GM12878 (cell line): ENCODE measurements at regions of chr3 and their contacts with region 1.

Region 1: DNA sequence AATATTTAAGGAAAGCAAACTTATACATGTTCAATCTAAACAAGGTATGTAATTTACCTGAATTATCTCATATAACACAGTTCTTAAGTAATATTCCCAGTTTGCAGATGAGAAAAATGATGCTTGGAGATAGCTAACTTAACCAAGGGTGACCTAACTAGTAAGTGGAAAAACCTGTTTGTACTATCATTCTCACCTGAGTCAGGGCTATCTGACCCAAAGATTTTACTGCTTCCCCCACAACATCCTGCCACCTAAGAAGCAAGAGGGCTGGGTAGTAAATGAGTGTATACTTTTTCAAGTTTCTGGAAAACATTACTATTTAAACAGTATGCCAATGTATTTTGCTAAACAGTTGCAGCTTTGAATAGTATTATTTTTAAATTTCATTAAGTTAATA is 10.6 kb downstream of the TP63 start:
- DNase-seq: no peak
- ATAC-seq: peak; percentile 81
- H3K4me3 ChIP-seq: no peak overlapping the region
- H3K27ac ChIP-seq: no peak overlapping the region
- H3K4me1 ChIP-seq: peaks cover 8% of the 10 kb centered on the region; the same call in 1 of the 2 replicates
- H3K27me3 ChIP-seq: no peaks in the 10 kb centered on the region
- CTCF ChIP-seq: no peak
- EP300 ChIP-seq: no peak
- POLR2A ChIP-seq: no peak
- RAD21 ChIP-seq: no peak

Region 2: DNA sequence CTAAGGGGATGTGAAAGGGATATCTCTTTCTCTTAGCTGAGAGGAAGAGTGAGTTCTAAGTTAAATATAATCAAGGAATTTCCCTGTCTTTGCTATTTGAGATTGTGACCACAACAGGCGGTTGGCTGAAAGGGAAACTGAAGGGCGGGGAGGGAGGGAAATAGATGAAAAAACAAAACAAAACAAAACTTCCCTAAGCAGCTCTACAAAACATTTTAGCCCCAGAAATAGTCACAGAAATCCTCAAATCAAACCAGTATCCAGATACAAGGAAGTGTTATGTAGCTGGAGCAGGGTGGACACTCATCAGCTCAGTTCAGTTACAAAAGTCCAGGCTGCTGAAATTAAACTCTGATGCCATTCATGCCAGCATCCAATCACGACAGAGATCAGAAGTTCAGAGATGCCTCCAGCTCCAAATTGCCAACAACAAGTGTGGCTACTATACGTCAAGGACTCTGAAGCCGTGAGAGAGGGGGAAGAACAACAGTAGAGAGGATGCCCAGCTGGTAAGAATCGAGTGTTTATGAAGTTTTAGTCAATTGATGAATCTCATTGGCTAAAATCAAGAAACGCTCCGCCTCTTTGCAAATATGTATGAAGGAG is 10.9 kb before region 1 on chr3:
- CTCF ChIA-PET with region 1: interaction called, 5 read pairs
- POLR2A ChIA-PET with region 1: interaction called, 11 read pairs
- RAD21 ChIA-PET with region 1: interaction called, 12 read pairs
- SMC1A ChIA-PET with region 1: interaction called, 39 read pairs
- in situ Hi-C with region 1: no loop called
- intact Hi-C with region 1: no loop called
- DNase-seq: peak; percentile 73
- ATAC-seq: peak; percentile 81
- H3K4me3 ChIP-seq: peak overlapping the region; percentile 65
- H3K27ac ChIP-seq: peak overlapping the region; percentile 86
- H3K4me1 ChIP-seq: peaks cover 13% of the 10 kb centered on the region; the same call in 1 of the 2 replicates
- H3K27me3 ChIP-seq: no peaks in the 10 kb centered on the region
- CTCF ChIP-seq: no peak
- EP300 ChIP-seq: peak in 1 of 2 experiments; percentile 41; a peak in 1 of 4 replicates
- POLR2A ChIP-seq: no peak
- RAD21 ChIP-seq: 0 out of 2 replicates have a peak, but pooled peaks have one; percentile 6

Region 3: DNA sequence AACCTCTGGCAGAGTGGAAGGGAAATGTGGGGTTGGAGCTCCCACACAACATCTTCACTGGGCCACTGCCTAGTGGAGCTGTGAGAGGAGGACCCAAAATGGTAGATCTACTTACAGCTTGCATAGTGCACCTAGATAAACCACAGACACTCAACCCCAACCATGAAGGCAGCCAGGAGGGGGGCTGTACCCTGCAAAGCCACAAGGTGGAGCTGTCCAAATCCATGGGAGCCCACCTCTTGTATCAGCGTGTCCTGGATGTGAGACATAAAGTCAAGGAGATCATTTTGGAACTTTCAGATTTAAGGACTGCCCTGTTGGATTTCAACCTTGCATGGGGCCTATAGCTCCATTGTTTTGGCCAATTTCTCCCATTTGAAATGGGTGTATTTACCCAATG is 10.3 kb after region 1 on chr3:
- CTCF ChIA-PET with region 1: interaction called, 6 read pairs
- POLR2A ChIA-PET with region 1: interaction called, 4 read pairs
- RAD21 ChIA-PET with region 1: interaction called, 6 read pairs
- SMC1A ChIA-PET with region 1: interaction called, 14 read pairs
- in situ Hi-C with region 1: no loop called
- intact Hi-C with region 1: no loop called
- DNase-seq: no peak
- ATAC-seq: no peak
- H3K4me3 ChIP-seq: no peak overlapping the region
- H3K27ac ChIP-seq: no peak overlapping the region
- H3K4me1 ChIP-seq: peaks cover 3% of the 10 kb centered on the region; the same call in 1 of the 2 replicates
- H3K27me3 ChIP-seq: no peaks in the 10 kb centered on the region
- CTCF ChIP-seq: peak in 2 of 3 experiments; percentile 36 to 37; a peak in 2 of 6 replicates
- EP300 ChIP-seq: no peak
- POLR2A ChIP-seq: no peak
- RAD21 ChIP-seq: 0 out of 2 replicates have a peak, but pooled peaks have one; percentile 3

Region 4: DNA sequence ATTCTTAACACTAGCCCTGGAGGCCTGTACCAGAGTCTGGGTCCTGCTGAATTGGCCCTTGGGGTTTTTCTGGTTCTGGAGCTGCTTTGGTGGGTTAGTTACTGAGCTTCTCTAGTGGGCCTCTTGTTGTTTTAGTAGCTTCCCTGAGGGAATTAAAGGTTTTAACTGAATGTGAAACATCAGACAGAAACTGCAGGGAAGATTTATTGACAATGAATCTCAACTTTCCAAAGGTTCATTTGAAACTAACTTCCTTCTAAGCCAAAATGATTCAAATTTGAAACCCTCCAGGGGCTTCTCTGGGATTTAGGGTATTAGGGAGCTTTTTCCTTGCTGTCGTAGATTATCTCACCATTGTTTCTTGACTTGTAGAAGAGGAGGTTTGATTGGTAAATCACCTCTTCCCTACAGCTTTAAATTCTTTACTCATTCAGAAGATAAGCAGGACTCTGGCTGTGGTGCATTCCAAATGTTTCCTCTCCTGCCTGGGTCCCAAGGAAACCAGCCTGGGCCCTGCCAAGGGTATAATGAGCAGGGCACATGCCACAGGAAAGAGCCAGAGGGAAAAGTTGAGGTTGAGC is 60.4 kb after region 1 on chr3:
- CTCF ChIA-PET with region 1: no interaction called
- POLR2A ChIA-PET with region 1: no interaction called
- RAD21 ChIA-PET with region 1: no interaction called
- SMC1A ChIA-PET with region 1: no interaction called
- in situ Hi-C with region 1: no loop called
- intact Hi-C with region 1: no loop called
- DNase-seq: no peak
- ATAC-seq: no peak
- H3K4me3 ChIP-seq: no peak overlapping the region
- H3K27ac ChIP-seq: no peak overlapping the region
- H3K4me1 ChIP-seq: no peaks in the 10 kb centered on the region
- H3K27me3 ChIP-seq: no peaks in the 10 kb centered on the region
- CTCF ChIP-seq: no peak
- EP300 ChIP-seq: no peak
- POLR2A ChIP-seq: no peak
- RAD21 ChIP-seq: no peak